ENCODE measurements at regions of chrX and their contacts with region 1.

Region 1: GRCh38 chrX:119880552-119881437 is 9.2 kb downstream of the NDUFA1 start:
- DNase-seq: peak; percentile 24
- H3K4me3 ChIP-seq: no peak overlapping the region
- H3K27ac ChIP-seq: no peak overlapping the region
- H3K4me1 ChIP-seq: no peaks in the 10 kb centered on the region
- H3K27me3 ChIP-seq: no peaks in the 10 kb centered on the region
- CTCF ChIP-seq: peak; percentile 24

Region 2: GRCh38 chrX:119516157-119516702 is 364.6 kb before region 1 on chrX:
- intact Hi-C with region 1: loop called (anchors 10 kb)
- DNase-seq: peak; percentile 40
- H3K4me3 ChIP-seq: no peak overlapping the region
- H3K27ac ChIP-seq: no peak overlapping the region
- H3K4me1 ChIP-seq: no peaks in the 10 kb centered on the region
- H3K27me3 ChIP-seq: no peaks in the 10 kb centered on the region
- CTCF ChIP-seq: peak; percentile 79

Region 3: GRCh38 chrX:119579414-119579813 is 301.4 kb before region 1 on chrX:
- intact Hi-C with region 1: no loop called
- DNase-seq: no peak
- H3K4me3 ChIP-seq: no peak overlapping the region
- H3K27ac ChIP-seq: no peak overlapping the region
- H3K4me1 ChIP-seq: no peaks in the 10 kb centered on the region
- H3K27me3 ChIP-seq: no peaks in the 10 kb centered on the region
- CTCF ChIP-seq: no peak